Transverse colon (tissue), 4 donors: ENCODE measurements at regions of chr3 and their contacts with region 1.

Region 1: DNA sequence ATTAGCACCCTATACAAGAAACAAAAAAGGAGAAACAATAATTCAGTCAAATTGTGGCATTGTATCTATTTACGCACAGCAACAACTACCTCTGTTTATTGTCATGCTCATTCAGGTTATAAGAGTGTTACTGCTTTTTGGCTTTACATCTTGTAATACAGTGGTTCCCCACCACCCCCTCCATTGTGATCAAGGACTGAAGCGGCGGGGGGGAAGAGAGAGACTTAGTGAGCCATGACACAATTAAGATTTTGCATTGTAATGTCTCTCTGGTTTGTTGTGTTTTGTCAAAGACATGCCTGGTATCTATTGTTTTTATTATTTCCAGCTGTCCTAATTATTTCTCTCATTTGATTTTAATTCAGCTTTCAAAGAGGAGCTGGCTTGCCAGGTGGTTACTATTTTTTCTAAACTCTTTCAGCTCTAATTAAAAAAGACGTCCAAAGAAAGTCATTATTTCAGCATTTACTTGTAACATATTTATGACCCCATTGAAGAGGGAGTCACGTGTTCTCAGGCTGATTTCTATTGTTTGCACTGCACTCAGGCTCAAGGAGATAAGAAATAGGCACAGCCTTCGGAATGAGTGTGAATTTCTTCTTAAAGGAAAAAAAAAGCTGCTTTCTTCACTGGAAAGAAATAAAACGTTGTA is 234.4 kb upstream of the TBL1XR1 start:
- DNase-seq: no peak
- H3K4me3 ChIP-seq: no peak overlapping the region
- H3K27ac ChIP-seq: no peak overlapping the region
- H3K4me1 ChIP-seq: peaks cover 0 to 11% (median 8%) of the 10 kb centered on the region in 4 donors
- H3K27me3 ChIP-seq: no peaks in the 10 kb centered on the region
- CTCF ChIP-seq: no peak
- EP300 ChIP-seq: no peak
- POLR2A ChIP-seq: no peak

Region 2: DNA sequence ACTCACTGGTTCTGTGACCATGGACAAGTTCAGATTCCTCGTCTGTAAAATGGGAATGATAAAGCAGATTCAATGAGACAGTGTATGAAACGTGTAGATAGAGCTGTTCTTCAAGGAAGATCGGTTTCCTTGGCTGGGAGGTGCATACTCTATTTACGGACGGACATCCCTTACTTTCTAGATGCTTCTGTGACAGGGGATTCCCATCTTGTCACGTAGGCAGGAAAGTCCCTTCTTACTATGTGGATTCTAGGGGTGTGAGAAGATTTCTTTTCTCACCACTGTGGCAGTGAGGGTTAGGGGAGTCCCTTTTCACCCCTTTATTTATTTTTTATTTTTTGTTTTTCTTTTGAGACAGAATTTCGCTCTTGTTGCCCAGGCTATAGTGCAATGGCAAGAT is 53.5 kb before region 1 on chr3:
- in situ Hi-C with region 1: no loop called
- intact Hi-C with region 1: loop called (anchors 10 kb)
- DNase-seq: no peak
- H3K4me3 ChIP-seq: no peak overlapping the region
- H3K27ac ChIP-seq: no peak overlapping the region
- H3K4me1 ChIP-seq: peaks cover 0 to 4% (median 0%) of the 10 kb centered on the region in 4 donors
- H3K27me3 ChIP-seq: no peaks in the 10 kb centered on the region
- CTCF ChIP-seq: no peak
- EP300 ChIP-seq: no peak
- POLR2A ChIP-seq: no peak

Region 3: GRCh38 chr3:178671791-178672190 is 1240.1 kb after region 1 on chr3:
- in situ Hi-C with region 1: no loop called
- intact Hi-C with region 1: no loop called
- DNase-seq: no peak
- H3K4me3 ChIP-seq: no peak overlapping the region
- H3K27ac ChIP-seq: no peak overlapping the region
- H3K4me1 ChIP-seq: peaks cover 0 to 7% (median 0%) of the 10 kb centered on the region in 4 donors
- H3K27me3 ChIP-seq: no peaks in the 10 kb centered on the region
- CTCF ChIP-seq: no peak
- EP300 ChIP-seq: no peak
- POLR2A ChIP-seq: no peak